Panc1 (cell line): ENCODE measurements at regions of chr1 and their contacts with region 1.

Region 1: DNA sequence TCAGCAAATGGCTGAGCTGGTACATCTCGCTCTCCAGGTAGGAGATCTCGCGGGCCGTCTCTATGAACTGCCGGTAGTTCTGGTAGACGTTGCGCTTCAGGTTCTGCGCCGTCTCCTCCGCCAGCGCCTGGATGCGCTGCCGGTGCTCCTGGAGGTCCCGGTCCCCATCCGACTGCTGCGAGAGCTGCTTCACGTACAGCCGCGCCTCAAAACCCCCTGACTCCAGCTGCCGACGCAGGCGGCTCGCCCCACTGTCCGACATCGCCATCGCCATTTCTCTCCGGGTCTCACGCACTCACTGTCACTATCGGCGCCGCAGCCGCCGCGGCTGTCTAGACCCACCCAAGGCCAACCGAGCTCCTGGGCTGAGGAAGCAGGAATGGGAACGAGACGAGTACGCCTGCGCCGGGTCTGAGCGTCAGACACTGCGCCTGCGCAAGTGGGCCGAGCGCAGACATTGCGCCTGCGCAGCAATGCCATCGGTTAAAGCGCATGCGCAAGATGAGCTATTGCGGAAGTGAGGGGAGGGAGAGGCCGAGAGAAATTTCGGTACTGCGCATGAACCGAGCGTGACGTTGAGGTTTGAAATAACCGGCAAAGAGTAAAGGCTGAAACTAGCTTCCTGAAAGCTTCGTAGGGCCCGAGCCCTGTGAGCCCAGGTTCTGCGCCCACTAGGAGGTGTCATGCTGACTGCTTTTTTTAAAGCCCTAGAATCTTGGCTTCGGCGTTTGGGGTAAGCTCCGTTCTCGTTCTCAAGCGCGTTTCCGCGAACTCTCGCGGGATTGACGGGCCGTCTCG is at the start of gene EXOC8:
- DNase-seq: peak; percentile 97
- ATAC-seq: peak; percentile 94
- H3K4me3 ChIP-seq: peak within 1 kb of the TSS; percentile 65 to 93
- H3K27ac ChIP-seq: peak within 1 kb of the TSS; percentile 97
- H3K4me1 ChIP-seq: peaks cover 19% of the 10 kb centered on the region
- H3K27me3 ChIP-seq: no peaks in the 10 kb centered on the region
- CTCF ChIP-seq: no peak
- total RNA-seq, gene EXOC8: 14.0 TPM

Region 2: GRCh38 chr1:231226156-231226555 is 111.5 kb before region 1 on chr1:
- CTCF ChIA-PET with region 1: no interaction called
- POLR2A ChIA-PET with region 1: interaction called, 17 read pairs
- in situ Hi-C with region 1: no loop called
- intact Hi-C with region 1: no loop called
- DNase-seq: no peak
- ATAC-seq: no peak
- H3K4me3 ChIP-seq: no peak overlapping the region
- H3K27ac ChIP-seq: no peak overlapping the region
- H3K4me1 ChIP-seq: no peaks in the 10 kb centered on the region
- H3K27me3 ChIP-seq: no peaks in the 10 kb centered on the region
- CTCF ChIP-seq: no peak

Region 3: GRCh38 chr1:231240883-231241735 is 96.6 kb before region 1 on chr1 and contains the start of gene GNPAT:
- CTCF ChIA-PET with region 1: no interaction called
- POLR2A ChIA-PET with region 1: interaction called, 3 read pairs
- in situ Hi-C with region 1: no loop called
- intact Hi-C with region 1: loop called (anchors 10 kb)
- DNase-seq: peak; percentile 25
- ATAC-seq: peak; percentile 98
- H3K4me3 ChIP-seq: peak within 1 kb of the TSS; percentile 69 to 99
- H3K27ac ChIP-seq: peak within 1 kb of the TSS; percentile 98
- H3K4me1 ChIP-seq: peaks cover 20% of the 10 kb centered on the region
- H3K27me3 ChIP-seq: no peaks in the 10 kb centered on the region
- CTCF ChIP-seq: no peak
- total RNA-seq, gene GNPAT: 42.5 TPM

Region 4: GRCh38 chr1:231431665-231432415 is 94.2 kb after region 1 on chr1:
- CTCF ChIA-PET with region 1: no interaction called
- POLR2A ChIA-PET with region 1: no interaction called
- in situ Hi-C with region 1: no loop called
- intact Hi-C with region 1: no loop called
- DNase-seq: no peak
- ATAC-seq: no peak
- H3K4me3 ChIP-seq: no peak overlapping the region
- H3K27ac ChIP-seq: no peak overlapping the region
- H3K4me1 ChIP-seq: no peaks in the 10 kb centered on the region
- H3K27me3 ChIP-seq: no peaks in the 10 kb centered on the region
- CTCF ChIP-seq: no peak

Region 5: GRCh38 chr1:231818337-231818736 is 480.7 kb after region 1 on chr1:
- CTCF ChIA-PET with region 1: no interaction called
- POLR2A ChIA-PET with region 1: no interaction called
- in situ Hi-C with region 1: no loop called
- intact Hi-C with region 1: no loop called
- DNase-seq: no peak
- ATAC-seq: no peak
- H3K4me3 ChIP-seq: no peak overlapping the region
- H3K27ac ChIP-seq: no peak overlapping the region
- H3K4me1 ChIP-seq: no peaks in the 10 kb centered on the region
- H3K27me3 ChIP-seq: no peaks in the 10 kb centered on the region
- CTCF ChIP-seq: no peak